ENCODE measurements at regions of chr1 and their contacts with region 1.

Region 1: GRCh38 chr1:61293197-61293596 is 210.8 kb downstream of the NFIA start:
- DNase-seq: peak; percentile 87
- H3K4me3 ChIP-seq: no peak overlapping the region
- H3K27ac ChIP-seq: peak overlapping the region; percentile 69
- H3K4me1 ChIP-seq: peaks cover 31% of the 10 kb centered on the region
- H3K27me3 ChIP-seq: no peaks in the 10 kb centered on the region
- CTCF ChIP-seq: no peak

Region 2: GRCh38 chr1:61141288-61142042 is 151.7 kb before region 1 on chr1:
- CTCF ChIA-PET with region 1: no interaction called
- dilution Hi-C with region 1: no loop called
- in situ Hi-C with region 1: no loop called
- intact Hi-C with region 1: loop called (anchors 5 kb)
- DNase-seq: peak; percentile 94
- H3K4me3 ChIP-seq: no peak overlapping the region
- H3K27ac ChIP-seq: peak overlapping the region; percentile 77
- H3K4me1 ChIP-seq: peaks cover 42% of the 10 kb centered on the region
- H3K27me3 ChIP-seq: no peaks in the 10 kb centered on the region
- CTCF ChIP-seq: no peak

Region 3: GRCh38 chr1:61332196-61332753 is 39.1 kb after region 1 on chr1:
- CTCF ChIA-PET with region 1: no interaction called
- dilution Hi-C with region 1: loop called (anchors 5 kb)
- in situ Hi-C with region 1: no loop called
- intact Hi-C with region 1: no loop called
- DNase-seq: no peak
- H3K4me3 ChIP-seq: no peak overlapping the region
- H3K27ac ChIP-seq: no peak overlapping the region
- H3K4me1 ChIP-seq: peaks cover 5% of the 10 kb centered on the region
- H3K27me3 ChIP-seq: no peaks in the 10 kb centered on the region
- CTCF ChIP-seq: no peak

Region 4: GRCh38 chr1:61403679-61404596 is 110.7 kb after region 1 on chr1:
- CTCF ChIA-PET with region 1: no interaction called
- dilution Hi-C with region 1: no loop called
- in situ Hi-C with region 1: no loop called
- intact Hi-C with region 1: no loop called
- DNase-seq: no peak
- H3K4me3 ChIP-seq: no peak overlapping the region
- H3K27ac ChIP-seq: no peak overlapping the region
- H3K4me1 ChIP-seq: no peaks in the 10 kb centered on the region
- H3K27me3 ChIP-seq: no peaks in the 10 kb centered on the region
- CTCF ChIP-seq: no peak

Measured in mammary epithelial cell (primary cell).